ENCODE measurements at regions of chr6 and their contacts with region 1.

Region 1: DNA sequence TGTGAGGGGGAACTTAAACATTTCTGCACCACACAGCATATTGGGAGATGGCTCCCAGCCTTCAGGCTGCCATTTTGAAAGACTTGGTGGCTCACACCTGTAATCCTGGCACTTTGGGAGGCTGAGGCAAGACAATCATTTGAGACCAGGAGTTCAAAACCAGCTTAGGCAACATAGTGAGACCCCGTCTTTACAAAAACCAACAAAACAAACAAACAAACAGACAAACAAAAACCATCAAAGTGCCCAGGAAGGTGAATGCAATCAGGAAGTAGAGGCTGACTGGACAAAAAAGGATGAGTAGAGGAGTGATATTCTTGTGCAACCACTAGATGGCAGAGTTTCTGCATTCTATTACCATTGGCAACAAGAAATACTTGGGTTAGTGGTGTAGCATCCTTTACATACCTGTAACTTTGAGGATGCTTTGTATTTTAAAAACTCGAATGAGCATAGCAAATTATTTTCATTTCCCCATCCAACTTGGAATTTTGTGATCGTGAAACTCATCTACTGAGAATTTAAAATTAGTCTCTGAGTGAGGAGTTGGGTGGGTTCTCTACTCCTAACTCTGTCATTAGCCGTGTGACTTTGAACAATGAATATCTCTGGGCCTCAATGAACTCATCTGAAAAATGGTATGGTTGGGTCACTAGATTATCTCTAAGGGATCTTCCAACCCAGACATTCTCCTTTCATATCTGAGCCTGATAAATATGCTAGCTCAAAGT is 84.4 kb downstream of the CRYBG1 start:
- DNase-seq: peak; percentile 79
- H3K4me3 Mint-ChIP-seq: no peak overlapping the region
- H3K27ac Mint-ChIP-seq: no peak overlapping the region
- H3K4me1 Mint-ChIP-seq: peaks cover 6% of the 10 kb centered on the region
- H3K27me3 Mint-ChIP-seq: no peaks in the 10 kb centered on the region
- CTCF ChIP-seq: peak; percentile 65

Region 2: DNA sequence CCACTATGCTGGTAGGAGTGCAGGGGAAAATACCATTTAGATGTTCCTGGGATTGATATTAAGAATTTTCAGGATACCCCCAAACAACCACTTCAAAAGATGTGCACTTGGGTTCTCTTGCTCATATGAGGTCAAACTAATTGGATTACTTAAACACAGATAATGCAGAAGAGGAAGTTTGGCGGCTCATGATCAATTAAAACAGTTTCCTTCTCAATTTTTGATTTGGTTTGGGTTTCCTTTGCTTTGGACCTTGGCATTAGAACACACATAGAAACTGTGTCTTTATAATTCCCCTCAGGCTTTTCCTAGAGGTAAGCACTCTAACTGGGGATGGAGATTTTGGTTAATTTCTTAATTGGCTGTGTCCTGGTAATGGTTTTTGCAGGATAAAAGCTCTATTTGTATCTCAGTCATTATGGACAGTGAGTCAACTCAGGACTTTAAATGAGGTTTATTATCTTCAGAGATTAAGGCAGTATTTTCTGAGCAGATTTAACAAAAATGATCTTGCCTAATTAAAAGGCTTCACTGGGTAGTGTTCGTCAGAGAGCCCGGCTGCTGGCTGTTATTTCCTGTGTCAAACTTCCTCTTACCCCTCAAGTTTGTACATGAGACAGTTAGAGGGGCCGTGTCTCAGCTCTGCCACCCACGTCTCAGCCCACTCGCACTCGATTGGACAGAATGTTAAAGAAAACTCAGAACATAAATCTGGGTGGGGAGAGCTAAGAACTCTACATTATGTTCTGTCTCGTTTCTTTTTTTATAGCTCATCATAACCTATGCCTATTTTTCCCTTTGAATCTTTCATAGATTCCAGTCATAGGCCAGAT is 991.8 kb before region 1 on chr6:
- CTCF ChIA-PET with region 1: interaction called, 10 read pairs
- POLR2A ChIA-PET with region 1: no interaction called
- intact Hi-C with region 1: no loop called
- DNase-seq: no peak
- H3K4me3 Mint-ChIP-seq: no peak overlapping the region
- H3K27ac Mint-ChIP-seq: no peak overlapping the region
- H3K4me1 Mint-ChIP-seq: peaks cover 1% of the 10 kb centered on the region
- H3K27me3 Mint-ChIP-seq: no peaks in the 10 kb centered on the region
- CTCF ChIP-seq: no peak

Region 3: GRCh38 chr6:105484238-105485161 is 960.4 kb before region 1 on chr6:
- CTCF ChIA-PET with region 1: no interaction called
- POLR2A ChIA-PET with region 1: no interaction called
- intact Hi-C with region 1: loop called (anchors 10 kb)
- DNase-seq: peak; percentile 71
- H3K4me3 Mint-ChIP-seq: peak overlapping the region; percentile 3
- H3K27ac Mint-ChIP-seq: peak overlapping the region; percentile 83
- H3K4me1 Mint-ChIP-seq: peaks cover 36% of the 10 kb centered on the region
- H3K27me3 Mint-ChIP-seq: no peaks in the 10 kb centered on the region
- CTCF ChIP-seq: peak; percentile 80

Region 4: GRCh38 chr6:105705608-105706007 is 739.3 kb before region 1 on chr6:
- CTCF ChIA-PET with region 1: no interaction called
- POLR2A ChIA-PET with region 1: no interaction called
- intact Hi-C with region 1: no loop called
- DNase-seq: no peak
- H3K4me3 Mint-ChIP-seq: no peak overlapping the region
- H3K27ac Mint-ChIP-seq: no peak overlapping the region
- H3K4me1 Mint-ChIP-seq: no peaks in the 10 kb centered on the region
- H3K27me3 Mint-ChIP-seq: no peaks in the 10 kb centered on the region
- CTCF ChIP-seq: no peak

Region 5: DNA sequence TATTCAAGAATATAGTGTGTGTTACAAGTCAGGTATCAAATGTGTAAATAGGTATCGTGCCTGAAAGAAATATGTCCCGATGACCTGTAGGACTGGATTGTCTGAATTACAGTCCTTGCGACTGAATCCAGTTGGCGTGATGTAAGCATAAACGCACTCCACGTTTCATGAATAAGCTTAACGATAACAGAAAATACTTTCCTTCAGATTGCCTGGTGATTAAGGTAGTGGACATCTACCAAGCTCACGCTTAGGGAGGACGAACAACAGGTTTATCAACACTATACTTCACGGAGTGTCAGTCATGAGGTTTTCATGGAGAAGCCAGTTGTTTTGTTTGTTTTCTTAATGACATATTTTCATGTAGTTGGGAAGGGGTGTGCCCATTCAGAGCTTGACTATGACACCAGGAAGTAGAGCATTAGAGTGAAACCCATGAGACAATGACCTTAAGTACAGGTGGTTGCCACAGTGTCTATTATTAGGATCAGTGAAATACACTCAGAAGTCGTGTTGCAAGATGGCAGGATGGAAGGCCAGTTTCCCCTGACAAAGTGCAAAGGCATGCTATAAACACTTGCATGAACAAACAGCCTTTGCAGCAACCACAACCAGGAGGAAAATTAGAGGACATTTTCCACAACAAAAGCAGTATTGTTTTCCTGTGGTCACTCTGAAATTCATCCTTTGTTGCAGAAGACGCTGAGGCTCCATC is 664.6 kb before region 1 on chr6:
- CTCF ChIA-PET with region 1: no interaction called
- POLR2A ChIA-PET with region 1: no interaction called
- intact Hi-C with region 1: no loop called
- DNase-seq: peak; percentile 35
- H3K4me3 Mint-ChIP-seq: no peak overlapping the region
- H3K27ac Mint-ChIP-seq: no peak overlapping the region
- H3K4me1 Mint-ChIP-seq: peaks cover 6% of the 10 kb centered on the region
- H3K27me3 Mint-ChIP-seq: no peaks in the 10 kb centered on the region
- CTCF ChIP-seq: no peak

Region 6: GRCh38 chr6:106339334-106340029 is 105.5 kb before region 1 on chr6:
- CTCF ChIA-PET with region 1: interaction called, 55 read pairs
- POLR2A ChIA-PET with region 1: interaction called, 5 read pairs
- intact Hi-C with region 1: loop called (anchors 1 kb)
- DNase-seq: peak; percentile 87
- H3K4me3 Mint-ChIP-seq: peak overlapping the region; percentile 61
- H3K27ac Mint-ChIP-seq: peak overlapping the region; percentile 43
- H3K4me1 Mint-ChIP-seq: peaks cover 11% of the 10 kb centered on the region
- H3K27me3 Mint-ChIP-seq: no peaks in the 10 kb centered on the region
- CTCF ChIP-seq: peak; percentile 68

Region 7: GRCh38 chr6:106360410-106360988 is 84.4 kb before region 1 on chr6 and contains the start of gene CRYBG1:
- CTCF ChIA-PET with region 1: interaction called, 24 read pairs
- POLR2A ChIA-PET with region 1: interaction called, 8 read pairs
- intact Hi-C with region 1: loop called (anchors 1 kb)
- DNase-seq: peak; percentile 82
- H3K4me3 Mint-ChIP-seq: peak within 1 kb of the TSS; percentile 74
- H3K27ac Mint-ChIP-seq: no peak within 1 kb of the TSS
- H3K4me1 Mint-ChIP-seq: no peaks in the 10 kb centered on the region
- H3K27me3 Mint-ChIP-seq: no peaks in the 10 kb centered on the region
- CTCF ChIP-seq: peak; percentile 93
- total RNA-seq, gene CRYBG1: 36.5 and 45.3 TPM in 2 replicates

Region 8: DNA sequence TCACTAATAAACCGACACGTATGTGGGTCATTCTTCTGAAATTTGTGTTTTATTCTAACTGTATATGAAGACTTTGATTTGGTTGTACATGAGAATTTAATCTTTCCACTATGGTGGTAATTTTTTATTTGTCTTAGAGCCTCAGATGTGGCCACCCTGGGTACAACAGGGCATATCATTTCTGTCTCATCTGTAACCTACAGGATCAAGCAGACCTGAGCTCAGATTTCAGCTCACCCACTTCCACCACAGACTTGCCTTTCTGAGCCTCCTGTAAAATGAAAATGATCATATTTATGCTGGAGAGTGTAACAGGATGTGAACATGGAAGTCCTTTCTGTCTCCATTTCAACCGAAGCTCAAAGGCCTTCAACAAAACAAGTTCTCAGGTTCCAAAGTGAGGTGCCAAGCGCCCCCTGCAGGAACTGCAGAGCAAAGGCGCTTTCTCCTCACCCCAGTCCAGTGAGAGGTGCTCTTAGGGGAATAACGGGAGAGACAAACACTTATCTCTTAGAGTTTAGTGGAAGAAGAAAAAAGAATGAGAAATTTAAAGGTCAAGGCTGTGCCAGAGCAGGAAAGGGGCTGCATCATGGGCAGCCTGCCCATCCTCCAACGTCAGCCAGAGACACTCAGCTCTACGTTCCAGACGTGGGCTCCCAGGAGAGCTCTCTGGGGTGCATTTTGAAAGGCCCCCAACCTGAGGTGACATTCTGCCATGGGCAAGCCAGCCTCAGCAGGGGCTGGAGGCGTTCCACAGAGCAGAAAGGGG is 552.6 kb after region 1 on chr6:
- CTCF ChIA-PET with region 1: interaction called, 6 read pairs
- POLR2A ChIA-PET with region 1: no interaction called
- intact Hi-C with region 1: loop called (anchors 5 kb)
- DNase-seq: peak; percentile 67
- H3K4me3 Mint-ChIP-seq: no peak overlapping the region
- H3K27ac Mint-ChIP-seq: no peak overlapping the region
- H3K4me1 Mint-ChIP-seq: no peaks in the 10 kb centered on the region
- H3K27me3 Mint-ChIP-seq: no peaks in the 10 kb centered on the region
- CTCF ChIP-seq: peak; percentile 67

Region 9: GRCh38 chr6:107114213-107114905 is 669.4 kb after region 1 on chr6:
- CTCF ChIA-PET with region 1: no interaction called
- POLR2A ChIA-PET with region 1: no interaction called
- intact Hi-C with region 1: loop called (anchors 5 kb)
- DNase-seq: peak; percentile 86
- H3K4me3 Mint-ChIP-seq: peak overlapping the region; percentile 71
- H3K27ac Mint-ChIP-seq: no peak overlapping the region
- H3K4me1 Mint-ChIP-seq: no peaks in the 10 kb centered on the region
- H3K27me3 Mint-ChIP-seq: no peaks in the 10 kb centered on the region
- CTCF ChIP-seq: peak; percentile 91